Transverse colon (tissue), 4 donors: ENCODE measurements at regions of chr14 and their contacts with region 1.

Region 1: GRCh38 chr14:96275177-96276112 is 19.4 kb downstream of the BDKRB1 start:
- DNase-seq: peak; percentile 75
- H3K4me3 ChIP-seq: no peak overlapping the region
- H3K27ac ChIP-seq: peak overlapping the region; percentile 13 to 58 (median 33)
- H3K4me1 ChIP-seq: peaks cover 4 to 13% (median 5%) of the 10 kb centered on the region in 4 donors
- H3K27me3 ChIP-seq: no peaks in the 10 kb centered on the region
- CTCF ChIP-seq: peak; percentile 95 to 97 (median 96)
- EP300 ChIP-seq: no peak
- POLR2A ChIP-seq: no peak

Region 2: DNA sequence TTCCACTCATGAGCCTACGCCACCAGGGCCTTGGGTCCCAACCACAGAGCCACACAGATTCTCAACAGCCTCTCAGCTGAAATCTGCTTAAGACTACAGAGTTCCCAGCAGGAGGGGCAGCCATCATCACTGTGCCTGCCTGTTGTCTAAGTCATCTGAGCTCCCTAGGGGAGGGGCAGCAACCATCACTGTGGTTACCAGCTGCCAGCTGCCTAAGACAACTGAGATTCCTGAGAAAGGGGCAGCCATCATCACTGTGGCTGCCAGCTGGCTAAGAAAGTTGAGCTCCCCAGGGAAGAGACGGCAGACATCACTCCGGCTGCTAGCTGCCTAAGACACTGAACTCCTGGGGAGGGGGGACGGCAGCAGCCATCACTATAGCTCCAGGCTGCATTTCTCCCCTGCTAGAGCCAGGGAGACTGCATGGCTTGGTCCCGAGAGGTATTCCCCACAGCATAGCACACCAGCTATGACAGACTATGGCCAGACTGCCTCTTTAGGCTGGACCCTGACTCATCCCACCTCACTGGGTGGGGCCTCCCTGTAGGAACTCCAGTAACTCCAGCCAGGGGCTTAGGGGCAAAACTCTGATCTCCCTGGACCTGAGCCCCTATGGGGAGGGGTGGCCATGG is 273.5 kb before region 1 on chr14:
- in situ Hi-C with region 1: loop called in 2 of 4 experiments (anchors 10 to 25 kb)
- intact Hi-C with region 1: no loop called
- DNase-seq: no peak
- H3K4me3 ChIP-seq: no peak overlapping the region
- H3K27ac ChIP-seq: no peak overlapping the region
- H3K4me1 ChIP-seq: no peaks in the 10 kb centered on the region
- H3K27me3 ChIP-seq: peaks cover 25% of the 10 kb centered on the region
- CTCF ChIP-seq: no peak
- EP300 ChIP-seq: no peak
- POLR2A ChIP-seq: no peak